ENCODE measurements at regions of chr11 and their contacts with region 1.

Region 1: DNA sequence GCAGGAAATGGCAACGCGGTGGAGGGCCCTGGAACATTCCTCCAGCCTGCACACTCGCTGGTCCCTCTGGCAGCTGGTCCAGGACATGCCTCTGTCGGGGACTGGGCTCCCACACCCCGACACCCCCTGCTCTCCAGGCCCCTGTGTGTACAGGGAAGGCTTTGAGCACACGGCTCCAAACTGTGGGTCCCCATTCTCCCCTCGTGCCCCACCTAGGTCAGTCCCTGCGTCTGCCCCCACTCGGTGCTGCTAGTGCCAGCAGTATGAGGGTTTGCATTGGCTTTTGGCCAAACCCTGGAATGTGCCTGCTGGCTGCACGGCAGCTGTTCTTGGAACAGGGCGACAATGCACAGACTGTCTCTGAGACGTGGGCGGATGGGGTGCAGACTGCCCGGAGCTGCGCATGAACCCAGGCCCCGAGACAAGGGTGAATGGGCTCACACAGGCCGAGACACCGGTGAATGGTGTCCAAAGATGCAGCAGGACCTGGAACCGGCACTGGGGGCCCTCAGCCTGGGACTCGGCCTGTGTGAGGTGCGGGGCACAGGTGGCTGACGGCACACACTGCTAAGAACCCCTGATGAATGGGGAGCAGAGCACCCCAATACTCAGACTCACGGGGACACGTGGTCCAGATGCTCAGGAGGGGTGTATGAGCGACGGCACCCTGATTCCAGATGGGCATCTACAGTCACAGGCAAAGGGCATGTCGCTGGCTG is 7.5 kb upstream of the SYT8 start:
- DNase-seq: no peak
- ATAC-seq: no peak
- H3K4me3 Mint-ChIP-seq: no peak overlapping the region
- H3K27ac Mint-ChIP-seq: no peak overlapping the region
- H3K4me1 Mint-ChIP-seq: peaks cover 4% of the 10 kb centered on the region; the same call in 1 of the 2 replicates
- H3K27me3 Mint-ChIP-seq: no peaks in the 10 kb centered on the region; the same call in 1 of the 2 replicates
- CTCF ChIP-seq: no peak

Region 2: DNA sequence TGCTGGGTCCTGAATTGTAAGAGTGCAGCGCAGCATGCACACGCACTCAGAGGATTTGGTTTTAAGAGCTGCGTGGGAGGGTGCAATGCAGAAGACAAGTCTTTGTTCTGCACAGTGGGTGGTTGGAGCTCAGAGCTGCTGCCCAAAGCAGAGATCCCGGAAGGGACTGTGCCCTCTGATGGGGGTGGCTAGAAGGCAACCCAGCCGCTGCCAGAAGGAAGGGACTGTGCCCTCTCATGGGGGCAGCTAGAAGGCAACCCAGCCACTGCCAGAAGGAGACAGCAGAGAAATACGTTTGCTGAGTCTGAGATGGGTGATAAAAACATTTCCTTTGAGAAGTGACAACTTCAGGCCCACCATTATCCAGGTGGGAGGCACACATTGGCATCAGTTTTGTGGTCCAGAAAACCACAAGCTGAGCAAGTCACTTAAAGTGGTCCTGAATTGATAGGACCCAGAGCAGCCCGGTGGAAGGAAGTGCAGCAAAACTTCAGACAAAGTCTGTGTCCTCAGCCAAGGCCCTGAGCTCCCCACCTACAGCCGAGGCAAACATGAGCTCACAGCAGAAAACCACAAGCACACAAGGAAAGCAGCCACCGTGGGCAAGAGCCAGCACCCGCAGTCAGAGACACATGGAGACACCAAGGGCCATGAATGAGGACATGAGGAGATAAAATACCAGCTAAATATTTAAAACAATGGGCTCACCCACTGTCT is 126.0 kb before region 1 on chr11:
- CTCF ChIA-PET with region 1: interaction called, 20 read pairs
- POLR2A ChIA-PET with region 1: interaction called, 3 read pairs
- DNase-seq: no peak
- ATAC-seq: no peak
- H3K4me3 Mint-ChIP-seq: no peak overlapping the region
- H3K27ac Mint-ChIP-seq: no peak overlapping the region
- H3K4me1 Mint-ChIP-seq: no peaks in the 10 kb centered on the region
- H3K27me3 Mint-ChIP-seq: peaks cover 43% of the 10 kb centered on the region
- CTCF ChIP-seq: no peak

Region 3: GRCh38 chr11:1763796-1764661 is 63.2 kb before region 1 on chr11 and contains the start of gene CTSD:
- CTCF ChIA-PET with region 1: interaction called, 12 read pairs
- POLR2A ChIA-PET with region 1: no interaction called
- DNase-seq: peak; percentile 87
- ATAC-seq: peak; percentile 73
- H3K4me3 Mint-ChIP-seq: peak within 1 kb of the TSS; percentile 93
- H3K27ac Mint-ChIP-seq: peak within 1 kb of the TSS; percentile 91
- H3K4me1 Mint-ChIP-seq: 0 out of 2 replicates have a peak, but pooled peaks cover 3% of the 10 kb centered on the region
- H3K27me3 Mint-ChIP-seq: 0 out of 2 replicates have a peak, but pooled peaks cover 3% of the 10 kb centered on the region
- CTCF ChIP-seq: no peak
- total RNA-seq, gene CTSD: 194 to 199 TPM (median 198 TPM) in 3 replicates

Region 4: GRCh38 chr11:1796413-1797011 is 30.7 kb before region 1 on chr11:
- CTCF ChIA-PET with region 1: interaction called, 17 read pairs
- POLR2A ChIA-PET with region 1: no interaction called
- DNase-seq: no peak
- ATAC-seq: peak; percentile 77
- H3K4me3 Mint-ChIP-seq: no peak overlapping the region
- H3K27ac Mint-ChIP-seq: no peak overlapping the region
- H3K4me1 Mint-ChIP-seq: no peaks in the 10 kb centered on the region
- H3K27me3 Mint-ChIP-seq: peaks cover 36% of the 10 kb centered on the region
- CTCF ChIP-seq: no peak

Region 5: DNA sequence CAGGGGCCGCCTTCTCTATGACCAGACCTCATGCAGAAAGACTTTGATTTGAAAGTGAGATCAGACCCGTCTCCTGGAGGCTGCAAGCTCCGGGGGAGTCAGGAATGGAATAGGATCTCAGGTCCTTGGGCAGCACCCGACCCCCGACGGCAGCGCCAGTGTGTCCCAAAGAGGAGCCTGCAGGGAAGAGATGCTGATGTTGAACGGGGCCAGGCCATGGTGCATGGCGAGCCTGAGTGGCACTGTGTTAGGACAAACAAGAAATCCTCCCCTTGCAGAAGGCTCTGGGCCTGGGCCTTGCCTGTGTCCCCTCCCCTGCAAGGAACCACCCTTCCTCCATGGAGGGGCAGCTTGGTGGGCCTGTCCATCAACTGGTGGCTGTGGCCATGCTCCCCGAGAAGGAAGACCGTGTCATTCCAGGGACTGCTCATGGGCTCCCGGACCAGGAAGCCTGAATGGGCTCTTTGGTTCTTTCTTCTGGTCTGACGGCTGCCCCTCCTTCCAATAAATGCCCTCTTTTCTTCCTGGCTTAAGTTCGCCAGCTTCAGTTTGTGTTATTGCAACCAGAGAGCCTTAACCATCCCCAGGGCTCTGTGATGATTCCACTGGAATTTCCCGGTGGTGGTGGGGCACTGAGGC is 12.5 kb before region 1 on chr11:
- CTCF ChIA-PET with region 1: interaction called, 49 read pairs
- POLR2A ChIA-PET with region 1: no interaction called
- DNase-seq: no peak
- ATAC-seq: no peak
- H3K4me3 Mint-ChIP-seq: no peak overlapping the region
- H3K27ac Mint-ChIP-seq: no peak overlapping the region
- H3K4me1 Mint-ChIP-seq: no peaks in the 10 kb centered on the region
- H3K27me3 Mint-ChIP-seq: peaks cover 33% of the 10 kb centered on the region
- CTCF ChIP-seq: no peak

Region 6: GRCh38 chr11:1876361-1877063 is 49.3 kb after region 1 on chr11:
- CTCF ChIA-PET with region 1: interaction called, 27 read pairs
- POLR2A ChIA-PET with region 1: no interaction called
- DNase-seq: peak; percentile 77
- ATAC-seq: peak; percentile 85
- H3K4me3 Mint-ChIP-seq: no peak overlapping the region
- H3K27ac Mint-ChIP-seq: no peak overlapping the region
- H3K4me1 Mint-ChIP-seq: 0 out of 2 replicates have a peak, but pooled peaks cover 3% of the 10 kb centered on the region
- H3K27me3 Mint-ChIP-seq: no peaks in the 10 kb centered on the region; the same call in 1 of the 2 replicates
- CTCF ChIP-seq: peak; percentile 21; the same call in 1 of the 2 replicates

Region 7: DNA sequence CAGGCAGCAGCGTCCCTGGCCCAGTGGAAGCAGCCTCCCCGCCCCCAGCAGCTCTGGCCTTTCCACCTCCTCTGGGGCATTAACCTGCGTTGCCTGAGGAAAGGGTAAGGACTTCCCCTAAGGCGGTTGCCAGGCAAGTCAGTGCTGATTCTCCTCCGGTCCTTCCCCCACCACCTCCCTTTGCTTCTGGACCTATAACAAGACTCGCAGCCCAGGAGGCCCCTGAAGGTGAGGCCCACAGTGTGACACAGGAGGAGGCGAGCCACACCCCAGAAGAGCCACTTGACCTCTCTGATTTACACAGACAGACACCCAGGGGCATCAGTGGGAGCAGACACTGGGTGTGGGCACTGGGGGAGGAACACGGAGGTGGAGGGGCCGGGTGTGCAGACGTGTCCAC is 407.7 kb after region 1 on chr11:
- CTCF ChIA-PET with region 1: no interaction called
- POLR2A ChIA-PET with region 1: no interaction called
- DNase-seq: peak; percentile 40
- ATAC-seq: peak; percentile 86
- H3K4me3 Mint-ChIP-seq: no peak overlapping the region
- H3K27ac Mint-ChIP-seq: no peak overlapping the region
- H3K4me1 Mint-ChIP-seq: peaks cover 10% of the 10 kb centered on the region
- H3K27me3 Mint-ChIP-seq: peaks cover 58% of the 10 kb centered on the region
- CTCF ChIP-seq: no peak

Measured in WTC11 (cell line).